Activated T-helper 2 cell treated with anti-CD3 and anti-CD28 coated beads, Interferon-gamma antibody, Interleukin-2, Interleukin-4, amounts not matched to agents 10 μg/mL and 5 μg/mL and 100 μg/mL, durations not matched to agents 14 hours and 24 hours and 36 hours (primary cell): ENCODE measurements at regions of chr5 and their contacts with region 1.

Region 1: GRCh38 chr5:76256116-76256889 is 146.8 kb upstream of the IQGAP2 start:
- DNase-seq: peak; percentile 44
- H3K4me3 Mint-ChIP-seq: no peak overlapping the region
- H3K27ac Mint-ChIP-seq: no peak overlapping the region
- H3K4me1 Mint-ChIP-seq: peaks cover 7% of the 10 kb centered on the region
- H3K27me3 Mint-ChIP-seq: peaks cover 33% of the 10 kb centered on the region

Region 2: GRCh38 chr5:74576941-74577456 is 1679.3 kb before region 1 on chr5:
- intact Hi-C with region 1: no loop called
- DNase-seq: peak; percentile 17
- H3K4me3 Mint-ChIP-seq: peak overlapping the region; percentile 56
- H3K27ac Mint-ChIP-seq: peak overlapping the region; percentile 24
- H3K4me1 Mint-ChIP-seq: peaks cover 41% of the 10 kb centered on the region
- H3K27me3 Mint-ChIP-seq: peaks cover 23% of the 10 kb centered on the region

Region 3: DNA sequence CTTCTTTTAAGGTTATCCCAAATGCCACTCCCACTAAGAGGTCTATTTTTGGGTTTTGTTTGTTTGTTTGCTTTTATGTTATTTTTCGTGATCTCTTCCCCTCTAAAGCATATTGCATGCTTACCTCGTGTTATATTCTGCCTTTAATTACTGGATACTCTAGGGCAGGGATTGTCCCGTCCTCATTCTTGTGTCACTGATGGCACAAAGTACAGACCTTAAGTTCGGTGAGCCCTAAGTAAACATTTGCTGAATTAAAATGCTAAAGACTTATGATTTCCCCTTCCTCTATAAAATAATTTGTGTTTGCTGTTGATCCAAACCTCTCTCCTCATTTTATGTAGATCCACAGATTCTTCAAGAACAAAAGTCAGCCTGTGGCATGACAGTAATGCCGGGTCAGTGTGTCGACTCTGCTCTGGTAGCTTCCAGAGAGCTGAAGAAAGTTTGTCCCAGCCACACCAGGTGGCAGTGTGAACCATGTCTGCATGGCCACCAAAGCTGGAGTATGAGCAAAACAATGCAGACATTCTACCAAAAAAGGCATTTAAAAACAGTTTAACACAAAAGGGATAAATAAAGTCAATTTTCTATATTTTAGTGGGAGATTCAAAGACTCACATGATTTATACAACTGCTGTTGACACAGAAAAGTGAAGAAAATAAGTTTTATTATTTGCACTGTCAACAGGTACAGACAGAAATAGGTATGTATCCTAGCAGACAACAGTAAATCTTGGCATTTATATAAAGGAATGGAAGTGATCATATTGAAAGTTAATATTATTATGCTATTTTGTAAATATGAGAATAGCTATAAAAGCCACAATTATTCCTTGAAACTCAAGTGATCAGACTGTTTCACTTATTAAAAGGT is 521.2 kb before region 1 on chr5:
- intact Hi-C with region 1: loop called (anchors 10 kb)
- DNase-seq: no peak
- H3K4me3 Mint-ChIP-seq: no peak overlapping the region
- H3K27ac Mint-ChIP-seq: no peak overlapping the region
- H3K4me1 Mint-ChIP-seq: no peaks in the 10 kb centered on the region
- H3K27me3 Mint-ChIP-seq: peaks cover 10% of the 10 kb centered on the region

Region 4: DNA sequence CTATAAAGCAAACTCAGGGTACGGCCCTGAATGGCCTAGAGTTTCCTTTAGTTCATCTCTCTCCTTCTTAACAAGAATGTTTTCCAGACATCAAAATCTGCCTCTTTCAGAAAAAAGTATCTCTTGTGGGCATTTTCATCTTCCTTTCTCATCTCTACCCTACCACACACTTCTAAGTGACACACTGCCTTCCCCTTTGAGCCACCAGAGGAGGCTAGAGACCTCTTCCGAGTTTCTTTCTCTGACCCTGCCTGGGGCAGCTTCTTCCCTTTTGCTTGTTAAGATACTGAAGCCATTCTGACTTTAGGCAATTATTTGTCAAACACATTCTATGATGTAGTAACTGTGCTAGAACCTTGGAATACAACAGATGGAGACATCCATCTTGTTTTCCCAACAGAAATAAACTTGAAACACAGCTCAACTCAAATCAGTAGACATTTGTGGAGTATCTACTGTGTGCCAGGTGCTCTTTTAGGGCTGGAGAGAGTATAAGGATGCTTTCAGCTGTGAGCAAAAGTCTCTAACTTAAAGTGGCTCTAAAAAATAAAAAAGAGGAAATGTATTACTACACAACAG is 181.7 kb before region 1 on chr5:
- intact Hi-C with region 1: loop called (anchors 1 kb)
- DNase-seq: no peak
- H3K4me3 Mint-ChIP-seq: no peak overlapping the region
- H3K27ac Mint-ChIP-seq: no peak overlapping the region
- H3K4me1 Mint-ChIP-seq: no peaks in the 10 kb centered on the region
- H3K27me3 Mint-ChIP-seq: peaks cover 61% of the 10 kb centered on the region

Region 5: DNA sequence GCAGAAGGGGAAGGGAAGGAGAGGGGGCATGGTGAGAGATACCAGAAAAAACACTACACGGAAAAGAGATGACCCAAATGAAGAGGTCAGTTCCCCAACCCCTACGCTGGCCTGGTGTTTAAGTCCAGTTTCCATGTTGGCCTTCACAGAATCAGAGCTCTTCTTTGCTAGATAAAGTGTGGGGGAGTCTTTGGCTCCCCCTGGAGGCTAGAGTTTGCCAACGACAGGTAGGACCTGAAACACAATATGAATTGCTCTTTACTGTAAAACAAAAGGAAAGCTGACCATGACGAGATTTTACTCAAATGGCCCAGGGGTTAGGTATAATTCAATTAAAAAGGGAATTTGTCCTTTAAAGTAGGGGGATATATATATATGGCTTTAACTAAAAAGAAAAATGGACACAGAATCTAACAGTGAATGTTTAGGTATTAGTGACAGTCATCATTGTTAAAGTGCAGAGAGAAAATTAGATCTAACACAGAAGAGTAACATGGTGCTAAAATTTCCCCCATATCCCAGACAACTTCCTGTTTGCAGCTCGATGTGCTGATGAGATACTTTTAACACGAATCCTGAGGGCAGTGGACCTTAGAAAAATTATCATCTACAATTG is 81.1 kb before region 1 on chr5:
- intact Hi-C with region 1: loop called (anchors 5 kb)
- DNase-seq: peak; percentile 28
- H3K4me3 Mint-ChIP-seq: no peak overlapping the region
- H3K27ac Mint-ChIP-seq: no peak overlapping the region
- H3K4me1 Mint-ChIP-seq: peaks cover 18% of the 10 kb centered on the region
- H3K27me3 Mint-ChIP-seq: peaks cover 7% of the 10 kb centered on the region